Activated CD4-positive, alpha-beta memory T cell treated with anti-CD3 and anti-CD28 coated beads for 36 hours (primary cell): ENCODE measurements at regions of chr17 and their contacts with region 1.

Region 1: GRCh38 chr17:409848-410545 is 57.4 kb upstream of the RPH3AL start:
- DNase-seq: peak; percentile 100
- H3K4me3 Mint-ChIP-seq: peak overlapping the region; percentile 87
- H3K27ac Mint-ChIP-seq: peak overlapping the region; percentile 93
- H3K4me1 Mint-ChIP-seq: peaks cover 65% of the 10 kb centered on the region
- H3K27me3 Mint-ChIP-seq: peaks cover 5% of the 10 kb centered on the region

Region 2: DNA sequence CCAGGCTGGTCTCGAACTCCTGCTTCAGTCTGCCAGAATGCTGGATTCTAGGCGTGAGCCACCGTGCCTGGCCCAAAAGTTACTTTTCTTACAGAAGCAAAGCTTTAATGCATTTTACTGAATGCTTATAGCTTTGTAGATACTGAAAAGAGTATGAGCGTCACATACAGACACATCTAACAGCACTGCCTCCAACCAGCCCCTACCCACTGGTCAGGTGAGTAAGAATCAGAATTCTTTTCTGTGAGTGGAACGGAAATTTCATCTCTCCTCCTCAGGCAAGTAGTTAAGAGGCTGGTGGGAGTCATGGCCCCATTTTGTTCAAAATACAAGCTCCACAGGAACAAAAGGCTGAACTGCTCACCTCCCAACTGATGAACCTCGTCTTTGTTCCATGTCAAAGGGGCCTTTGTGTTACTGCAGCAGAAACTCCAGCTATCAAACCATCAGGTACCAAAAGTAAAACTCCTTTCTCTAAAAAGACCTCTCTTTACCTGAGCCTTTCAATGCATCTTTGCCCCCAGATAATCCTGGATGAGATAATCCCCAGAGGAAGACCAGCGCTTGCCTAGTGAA is 35.0 kb after region 1 on chr17:
- CTCF ChIA-PET with region 1: interaction called, 10 read pairs
- POLR2A ChIA-PET with region 1: no interaction called
- intact Hi-C with region 1: no loop called
- DNase-seq: peak; percentile 15
- H3K4me3 Mint-ChIP-seq: no peak overlapping the region
- H3K27ac Mint-ChIP-seq: peak overlapping the region; percentile 18
- H3K4me1 Mint-ChIP-seq: peaks cover 5% of the 10 kb centered on the region
- H3K27me3 Mint-ChIP-seq: no peaks in the 10 kb centered on the region

Region 3: GRCh38 chr17:688100-688989 is 278.3 kb after region 1 on chr17:
- CTCF ChIA-PET with region 1: interaction called, 10 read pairs
- POLR2A ChIA-PET with region 1: no interaction called
- intact Hi-C with region 1: loop called (anchors 5 kb)
- DNase-seq: no peak
- H3K4me3 Mint-ChIP-seq: no peak overlapping the region
- H3K27ac Mint-ChIP-seq: no peak overlapping the region
- H3K4me1 Mint-ChIP-seq: peaks cover 3% of the 10 kb centered on the region
- H3K27me3 Mint-ChIP-seq: no peaks in the 10 kb centered on the region

Region 4: GRCh38 chr17:716238-716637 is 306.2 kb after region 1 on chr17:
- CTCF ChIA-PET with region 1: interaction called, 15 read pairs
- POLR2A ChIA-PET with region 1: no interaction called
- intact Hi-C with region 1: no loop called
- DNase-seq: no peak
- H3K4me3 Mint-ChIP-seq: no peak overlapping the region
- H3K27ac Mint-ChIP-seq: no peak overlapping the region
- H3K4me1 Mint-ChIP-seq: peaks cover 23% of the 10 kb centered on the region
- H3K27me3 Mint-ChIP-seq: no peaks in the 10 kb centered on the region

Region 5: DNA sequence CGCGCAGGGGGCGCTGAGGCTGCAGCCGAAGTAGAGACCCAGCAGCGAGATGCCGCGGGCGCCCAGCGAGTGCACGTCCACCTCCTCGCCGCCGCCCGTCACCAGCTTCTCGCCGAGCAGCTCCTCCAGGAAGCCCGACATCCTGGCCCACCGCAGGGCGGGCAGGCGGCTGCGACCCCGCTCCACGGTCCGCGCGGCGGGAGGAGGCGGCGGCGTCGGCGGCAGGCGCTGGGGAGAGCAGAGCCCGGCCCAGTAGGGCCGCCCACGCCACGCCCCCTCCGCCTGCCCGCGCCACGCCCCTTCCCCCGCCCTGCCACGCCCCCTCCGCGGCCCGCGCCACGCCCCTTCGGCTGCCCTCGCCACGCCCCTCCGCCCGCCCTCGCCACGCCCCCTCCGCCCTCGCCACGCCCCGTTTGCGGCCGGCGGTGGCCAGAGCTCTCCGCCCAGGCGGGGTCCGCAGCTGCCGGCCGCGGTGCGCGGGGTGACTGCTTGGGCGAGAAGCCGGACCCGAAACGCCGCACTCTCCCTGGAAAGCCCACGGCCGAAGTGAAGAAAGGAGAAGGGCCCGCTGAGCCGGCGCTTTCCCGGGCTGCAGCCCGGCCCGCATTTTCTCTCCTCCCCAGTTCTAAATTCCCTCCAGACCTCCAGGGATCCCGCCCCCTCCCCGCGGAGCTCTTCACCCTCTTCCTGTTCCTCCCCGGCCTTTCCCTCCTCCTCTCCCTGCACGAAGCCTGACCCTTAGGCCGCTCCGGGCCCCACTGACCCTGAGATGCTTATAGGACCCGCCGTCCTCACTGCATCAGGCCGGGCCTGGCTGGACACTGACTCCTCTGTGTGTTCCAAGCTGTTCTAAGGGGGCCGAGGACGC is 569.8 kb after region 1 on chr17 and contains the start of gene NXN:
- CTCF ChIA-PET with region 1: interaction called, 18 read pairs
- POLR2A ChIA-PET with region 1: no interaction called
- intact Hi-C with region 1: loop called (anchors 5 kb)
- DNase-seq: peak; percentile 90
- H3K4me3 Mint-ChIP-seq: peak within 1 kb of the TSS; percentile 63
- H3K27ac Mint-ChIP-seq: no peak within 1 kb of the TSS
- H3K4me1 Mint-ChIP-seq: peaks cover 11% of the 10 kb centered on the region
- H3K27me3 Mint-ChIP-seq: peaks cover 26% of the 10 kb centered on the region
- total RNA-seq, gene NXN: 0.31 to 0.33 TPM